ENCODE measurements at regions of chr1 and their contacts with region 1.

Region 1: DNA sequence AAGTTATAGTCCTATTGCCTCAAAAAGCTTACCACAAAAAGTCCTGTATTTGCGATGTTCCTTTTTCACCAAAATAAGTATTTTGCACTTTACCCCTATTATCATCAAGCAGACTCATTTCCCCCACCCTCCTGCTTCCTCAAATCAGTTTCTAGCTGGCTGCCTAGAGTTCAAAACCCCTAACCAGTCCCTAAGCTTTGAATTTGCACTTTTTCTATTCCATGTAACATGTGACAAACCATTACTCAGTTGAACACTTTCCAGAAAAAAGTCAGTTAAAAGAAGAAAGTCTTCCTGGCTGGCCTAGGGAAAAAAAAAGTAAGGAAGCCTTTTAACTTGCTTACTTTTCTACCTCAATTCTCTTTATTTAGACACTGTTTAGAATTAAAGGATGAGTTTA is 8.2 kb downstream of the CEP170 start:
- DNase-seq: no peak
- CTCF ChIP-seq: no peak

Region 2: GRCh38 chr1:243236604-243237252 is 10.2 kb before region 1 on chr1:
- CTCF ChIA-PET with region 1: interaction called, 11 read pairs
- POLR2A ChIA-PET with region 1: interaction called, 5 read pairs
- DNase-seq: no peak
- CTCF ChIP-seq: no peak

Region 3: GRCh38 chr1:243325305-243325890 is 78.5 kb after region 1 on chr1:
- CTCF ChIA-PET with region 1: no interaction called
- POLR2A ChIA-PET with region 1: no interaction called
- DNase-seq: peak; percentile 31
- CTCF ChIP-seq: peak; percentile 65

Measured in GM10248 (cell line).